ENCODE measurements at regions of chr1 and their contacts with region 1.

Region 1: DNA sequence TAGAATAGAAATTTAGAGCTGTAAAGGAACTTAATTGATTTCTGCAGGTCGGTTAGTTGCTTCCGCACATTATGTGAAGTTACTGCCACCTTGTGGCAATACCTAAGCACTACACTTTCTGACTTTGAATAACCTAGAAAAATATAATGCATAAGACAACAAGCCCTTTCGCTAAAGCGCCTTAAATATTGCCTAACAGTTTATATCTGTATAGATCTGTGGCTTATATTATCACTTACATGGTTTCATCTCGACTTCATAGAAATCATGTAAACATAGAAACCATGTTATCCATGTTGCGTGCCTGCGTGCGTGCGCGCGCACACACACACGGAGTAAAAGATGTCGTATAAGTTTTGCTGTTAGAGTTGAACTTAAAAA is 10.9 kb upstream of the IFI16 start:
- DNase-seq: peak in 2 of 6 donors; percentile 26 to 27
- ATAC-seq: peak; percentile 56 to 84 (median 72)
- H3K4me3 ChIP-seq: peak overlapping the region in 2 of 4 donors; percentile 22 to 26
- H3K27ac ChIP-seq: peak overlapping the region in 2 of 4 donors; percentile 27 to 29
- H3K4me1 ChIP-seq: peaks cover 0 to 5% (median 0%) of the 10 kb centered on the region in 3 donors
- H3K27me3 ChIP-seq: peaks cover 0 to 7% (median 0%) of the 10 kb centered on the region in 4 donors
- CTCF ChIP-seq: peak; percentile 68 to 83 (median 83)

Region 2: DNA sequence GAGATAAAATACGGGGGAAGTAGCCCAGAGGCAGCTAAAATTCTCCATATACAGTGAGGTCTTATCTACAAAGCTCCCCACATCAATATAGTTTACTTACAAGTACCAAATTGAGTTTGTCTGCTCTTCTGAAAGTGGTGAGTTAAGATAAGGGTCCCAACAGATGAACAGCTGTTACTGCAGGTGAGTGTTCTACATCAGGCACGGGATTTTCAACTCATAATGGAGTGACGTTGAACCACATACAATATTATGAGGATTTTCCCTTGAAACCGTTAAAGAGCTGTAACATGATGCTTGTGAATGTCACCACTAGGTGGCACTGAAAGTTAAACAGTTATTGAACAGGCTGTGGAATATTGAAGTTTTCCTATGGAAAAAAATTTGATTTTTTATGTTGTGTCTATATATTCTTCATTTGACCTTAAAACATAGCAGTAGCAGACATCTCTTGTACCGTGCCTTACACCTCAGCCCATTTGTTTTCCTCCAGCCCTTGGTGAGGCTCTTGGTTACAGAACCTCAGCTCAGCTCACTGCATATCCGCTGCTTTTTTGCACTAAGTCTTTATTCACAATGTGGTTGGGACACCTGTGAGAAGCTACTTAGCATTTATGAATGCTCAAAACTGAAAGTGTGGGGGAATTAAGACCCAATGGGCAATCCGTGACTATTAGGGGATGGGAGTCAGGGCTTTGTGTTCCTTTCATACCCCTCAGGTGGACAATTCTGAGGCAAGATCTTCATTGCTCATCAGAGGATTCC is 794.9 kb before region 1 on chr1:
- intact Hi-C with region 1: loop called in 1 of 3 experiments (anchors 10 kb)
- DNase-seq: peak in 1 of 6 donors; percentile 22
- ATAC-seq: peak in 3 of 4 donors; percentile 76 to 84 (median 79)
- H3K4me3 ChIP-seq: no peak overlapping the region
- H3K27ac ChIP-seq: no peak overlapping the region
- H3K4me1 ChIP-seq: no peaks in the 10 kb centered on the region
- H3K27me3 ChIP-seq: peaks cover 0 to 13% (median 0%) of the 10 kb centered on the region in 4 donors
- CTCF ChIP-seq: peak; percentile 72 to 82 (median 76)

Measured in pancreas (tissue), 10 donors.